Naive thymus-derived CD4-positive, alpha-beta T cell (primary cell): ENCODE measurements at regions of chr21 and their contacts with region 1.

Region 1: GRCh38 chr21:44065428-44065827 is 41.8 kb upstream of the PWP2 start:
- DNase-seq: peak; percentile 39 to 93 (median 90)
- ATAC-seq: peak; percentile 97
- H3K4me3 ChIP-seq: no peak overlapping the region
- H3K4me3 Mint-ChIP-seq: peak overlapping the region; percentile 68 to 87 (median 80)
- H3K27ac ChIP-seq: peak overlapping the region; percentile 85
- H3K27ac Mint-ChIP-seq: peak overlapping the region; percentile 82 to 100 (median 98)
- H3K4me1 ChIP-seq: peaks cover 18 to 19% of the 10 kb centered on the region in 2 donors
- H3K4me1 Mint-ChIP-seq: peaks cover 20 to 64% (median 50%) of the 10 kb centered on the region in 7 donors
- H3K27me3 ChIP-seq: no peaks in the 10 kb centered on the region
- H3K27me3 Mint-ChIP-seq: no peaks in the 10 kb centered on the region

Region 2: GRCh38 chr21:43778469-43779335 is 286.7 kb before region 1 on chr21:
- CTCF ChIA-PET with region 1: no interaction called
- POLR2A ChIA-PET with region 1: no interaction called
- intact Hi-C with region 1: no loop called
- DNase-seq: peak in 1 of 9 donors; percentile 28
- ATAC-seq: peak; percentile 32
- H3K4me3 ChIP-seq: no peak overlapping the region
- H3K4me3 Mint-ChIP-seq: peak overlapping the region; percentile 59 to 89 (median 70)
- H3K27ac ChIP-seq: peak overlapping the region; percentile 41
- H3K27ac Mint-ChIP-seq: peak overlapping the region; percentile 3 to 96 (median 57)
- H3K4me1 ChIP-seq: peaks cover 11 to 18% of the 10 kb centered on the region in 2 donors
- H3K4me1 Mint-ChIP-seq: peaks cover 23 to 62% (median 34%) of the 10 kb centered on the region in 7 donors
- H3K27me3 ChIP-seq: no peaks in the 10 kb centered on the region
- H3K27me3 Mint-ChIP-seq: no peaks in the 10 kb centered on the region

Region 3: DNA sequence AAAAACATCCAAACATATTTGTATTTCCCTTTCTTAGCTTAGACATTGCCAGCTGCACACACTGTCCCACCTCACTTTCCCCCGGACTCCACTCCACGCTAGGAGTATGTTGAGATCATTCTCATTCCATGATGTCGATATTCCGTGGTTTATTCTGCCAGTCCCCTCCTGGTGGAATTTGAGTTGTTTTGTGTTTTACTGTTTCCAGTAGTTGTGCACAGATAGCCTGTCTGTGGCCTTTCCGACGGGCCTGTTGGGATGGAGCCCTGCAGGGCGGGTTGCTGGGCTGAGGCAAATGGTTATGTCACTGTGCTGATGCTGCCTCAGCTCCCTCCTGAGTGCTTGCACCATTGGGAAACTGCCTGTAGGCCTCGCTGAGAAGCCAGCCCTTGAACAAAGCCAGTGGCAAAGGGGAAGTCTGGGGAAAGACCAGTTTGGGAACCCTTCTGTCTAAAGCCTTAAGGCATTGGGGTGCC is 40.5 kb before region 1 on chr21:
- CTCF ChIA-PET with region 1: no interaction called
- POLR2A ChIA-PET with region 1: no interaction called
- intact Hi-C with region 1: loop called in 1 of 2 experiments (anchors 5 kb)
- DNase-seq: no peak
- ATAC-seq: peak; percentile 54
- H3K4me3 ChIP-seq: no peak overlapping the region
- H3K4me3 Mint-ChIP-seq: peak overlapping the region in 8 of 10 donors; percentile 39 to 74 (median 52)
- H3K27ac ChIP-seq: no peak overlapping the region
- H3K27ac Mint-ChIP-seq: peak overlapping the region in 8 of 9 donors; percentile 5 to 86 (median 72)
- H3K4me1 ChIP-seq: peaks cover 59 to 62% of the 10 kb centered on the region in 2 donors
- H3K4me1 Mint-ChIP-seq: peaks cover 68 to 97% (median 87%) of the 10 kb centered on the region in 7 donors
- H3K27me3 ChIP-seq: no peaks in the 10 kb centered on the region
- H3K27me3 Mint-ChIP-seq: no peaks in the 10 kb centered on the region

Region 4: DNA sequence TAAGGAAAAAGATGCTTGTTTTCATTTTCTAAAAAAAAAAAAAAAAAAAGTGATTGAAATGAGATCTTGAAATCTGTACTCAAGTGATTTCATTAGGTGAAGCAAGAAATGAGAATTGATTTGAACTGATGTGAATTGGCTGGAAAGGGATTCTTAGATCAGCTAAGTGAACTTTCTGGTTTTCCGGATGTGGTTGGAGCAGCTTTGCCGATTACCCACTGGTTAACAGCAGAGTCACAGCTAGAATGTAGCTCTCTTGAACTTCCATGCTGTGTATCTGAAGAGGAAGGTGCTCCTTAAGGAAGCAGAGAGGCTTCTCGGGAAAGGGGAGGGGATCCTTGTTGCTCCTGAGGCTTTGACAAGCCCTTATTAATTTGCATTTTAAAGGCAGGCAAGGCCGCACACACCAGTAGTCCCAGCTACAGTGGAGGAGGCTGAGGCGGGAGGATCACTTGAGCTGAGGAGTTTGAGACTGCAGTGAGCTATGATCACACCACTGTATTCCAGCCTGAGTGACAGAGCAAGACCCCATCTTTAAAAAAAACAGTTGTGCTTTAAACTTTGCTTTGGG is 13.1 kb after region 1 on chr21:
- CTCF ChIA-PET with region 1: interaction called, 3 read pairs
- POLR2A ChIA-PET with region 1: interaction called, 10 read pairs
- intact Hi-C with region 1: loop called (anchors 1 kb)
- DNase-seq: no peak
- ATAC-seq: no peak
- H3K4me3 ChIP-seq: no peak overlapping the region
- H3K4me3 Mint-ChIP-seq: peak overlapping the region in 7 of 10 donors; percentile 17 to 50 (median 44)
- H3K27ac ChIP-seq: peak overlapping the region; percentile 43
- H3K27ac Mint-ChIP-seq: peak overlapping the region; percentile 65 to 97 (median 82)
- H3K4me1 ChIP-seq: peaks cover 26 to 46% of the 10 kb centered on the region in 2 donors
- H3K4me1 Mint-ChIP-seq: peaks cover 35 to 72% (median 62%) of the 10 kb centered on the region in 7 donors
- H3K27me3 ChIP-seq: no peaks in the 10 kb centered on the region
- H3K27me3 Mint-ChIP-seq: no peaks in the 10 kb centered on the region

Region 5: GRCh38 chr21:44083631-44084291 is 18.3 kb after region 1 on chr21:
- CTCF ChIA-PET with region 1: interaction called, 3 read pairs
- POLR2A ChIA-PET with region 1: interaction called, 10 read pairs
- intact Hi-C with region 1: loop called (anchors 1 kb)
- DNase-seq: peak; percentile 37 to 89 (median 85)
- ATAC-seq: peak; percentile 88
- H3K4me3 ChIP-seq: peak overlapping the region; percentile 50
- H3K4me3 Mint-ChIP-seq: peak overlapping the region; percentile 74 to 89 (median 82)
- H3K27ac ChIP-seq: peak overlapping the region; percentile 86
- H3K27ac Mint-ChIP-seq: peak overlapping the region; percentile 92 to 99 (median 97)
- H3K4me1 ChIP-seq: peaks cover 79 to 92% of the 10 kb centered on the region in 2 donors
- H3K4me1 Mint-ChIP-seq: peaks cover 65 to 97% (median 90%) of the 10 kb centered on the region in 7 donors
- H3K27me3 ChIP-seq: no peaks in the 10 kb centered on the region
- H3K27me3 Mint-ChIP-seq: no peaks in the 10 kb centered on the region